CD4-positive, alpha-beta T cell (primary cell): ENCODE measurements at regions of chr5 and their contacts with region 1.

Region 1: DNA sequence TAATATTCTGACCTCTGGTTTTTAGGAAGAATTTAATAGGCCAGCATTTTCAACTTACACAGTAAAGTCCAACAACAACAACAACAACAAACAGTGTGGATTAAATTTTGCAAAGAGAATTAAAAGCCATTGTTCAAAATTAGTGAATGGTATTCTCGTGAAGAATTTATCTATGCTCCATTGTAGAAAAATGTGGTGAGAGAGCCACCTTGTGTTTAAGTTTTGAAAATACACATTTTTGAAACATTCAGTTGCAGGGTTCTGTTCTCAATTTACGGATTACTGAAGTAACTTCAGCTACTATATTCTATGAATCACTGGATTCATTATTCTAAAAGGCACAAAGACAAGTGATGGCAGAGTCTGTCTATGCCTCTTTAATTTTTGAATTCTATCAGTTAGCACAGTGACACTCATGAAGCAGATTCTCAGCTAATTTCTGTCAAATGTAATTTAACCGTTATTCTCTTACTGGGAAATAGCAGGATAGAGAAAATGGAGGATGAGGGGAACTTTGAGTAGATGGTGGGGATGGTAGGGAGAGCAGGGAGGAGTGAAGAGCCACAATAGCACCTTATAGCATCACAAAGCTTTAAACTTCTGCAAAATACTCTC is 11.0 kb downstream of the CCDC152 start:
- DNase-seq: peak in 3 of 14 experiments; percentile 38 to 49 (median 44)
- ATAC-seq: no peak
- H3K4me3 ChIP-seq: no peak overlapping the region
- H3K4me3 Mint-ChIP-seq: no peak overlapping the region
- H3K27ac ChIP-seq: no peak overlapping the region
- H3K27ac Mint-ChIP-seq: no peak overlapping the region
- H3K4me1 ChIP-seq: no peaks in the 10 kb centered on the region
- H3K4me1 Mint-ChIP-seq: no peaks in the 10 kb centered on the region
- H3K27me3 ChIP-seq: no peaks in the 10 kb centered on the region
- H3K27me3 Mint-ChIP-seq: peaks cover 5% of the 10 kb centered on the region
- CTCF ChIP-seq: peak; percentile 70

Region 2: DNA sequence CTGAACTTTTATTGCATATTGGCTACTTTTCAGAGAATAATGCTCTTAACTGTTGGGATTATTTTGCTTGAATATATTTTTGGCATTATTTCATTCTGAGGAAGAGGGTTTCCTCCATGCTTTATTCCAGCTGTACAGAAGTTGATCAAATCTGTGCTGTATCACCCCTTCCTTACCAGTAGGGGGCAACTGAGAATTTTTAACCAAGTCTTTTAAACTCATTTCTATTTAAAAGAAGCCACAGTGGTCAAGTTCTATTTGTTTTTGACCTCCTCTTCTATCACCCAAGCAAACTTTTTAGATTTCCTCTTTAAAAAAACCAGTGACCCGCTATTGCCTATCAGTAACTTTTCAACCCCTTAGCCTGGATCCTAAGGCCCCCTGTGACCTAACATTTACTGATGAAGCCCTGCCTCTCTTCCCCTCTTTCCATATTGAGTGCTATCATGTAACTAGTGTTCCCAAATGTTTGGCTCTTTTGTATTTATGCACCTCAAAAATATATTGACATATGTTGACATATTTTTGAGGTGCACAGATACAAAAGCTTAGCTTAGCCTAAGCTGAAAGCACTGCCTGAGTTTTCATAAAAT is 761.9 kb before region 1 on chr5:
- CTCF ChIA-PET with region 1: no interaction called
- POLR2A ChIA-PET with region 1: no interaction called
- intact Hi-C with region 1: loop called (anchors 10 kb)
- DNase-seq: peak in 3 of 14 experiments; percentile 5 to 19 (median 15)
- ATAC-seq: no peak
- H3K4me3 ChIP-seq: no peak overlapping the region
- H3K4me3 Mint-ChIP-seq: no peak overlapping the region
- H3K27ac ChIP-seq: no peak overlapping the region
- H3K27ac Mint-ChIP-seq: no peak overlapping the region
- H3K4me1 ChIP-seq: no peaks in the 10 kb centered on the region
- H3K4me1 Mint-ChIP-seq: no peaks in the 10 kb centered on the region
- H3K27me3 ChIP-seq: no peaks in the 10 kb centered on the region
- H3K27me3 Mint-ChIP-seq: peaks cover 12% of the 10 kb centered on the region
- CTCF ChIP-seq: peak; percentile 81

Region 3: GRCh38 chr5:42514754-42515153 is 252.8 kb before region 1 on chr5:
- CTCF ChIA-PET with region 1: no interaction called
- POLR2A ChIA-PET with region 1: no interaction called
- intact Hi-C with region 1: loop called (anchors 5 to 10 kb)
- DNase-seq: peak in 2 of 14 experiments; percentile 20 to 23
- ATAC-seq: no peak
- H3K4me3 ChIP-seq: no peak overlapping the region
- H3K4me3 Mint-ChIP-seq: no peak overlapping the region
- H3K27ac ChIP-seq: no peak overlapping the region
- H3K27ac Mint-ChIP-seq: no peak overlapping the region
- H3K4me1 ChIP-seq: no peaks in the 10 kb centered on the region
- H3K4me1 Mint-ChIP-seq: no peaks in the 10 kb centered on the region
- H3K27me3 ChIP-seq: no peaks in the 10 kb centered on the region
- H3K27me3 Mint-ChIP-seq: no peaks in the 10 kb centered on the region
- CTCF ChIP-seq: no peak

Region 4: DNA sequence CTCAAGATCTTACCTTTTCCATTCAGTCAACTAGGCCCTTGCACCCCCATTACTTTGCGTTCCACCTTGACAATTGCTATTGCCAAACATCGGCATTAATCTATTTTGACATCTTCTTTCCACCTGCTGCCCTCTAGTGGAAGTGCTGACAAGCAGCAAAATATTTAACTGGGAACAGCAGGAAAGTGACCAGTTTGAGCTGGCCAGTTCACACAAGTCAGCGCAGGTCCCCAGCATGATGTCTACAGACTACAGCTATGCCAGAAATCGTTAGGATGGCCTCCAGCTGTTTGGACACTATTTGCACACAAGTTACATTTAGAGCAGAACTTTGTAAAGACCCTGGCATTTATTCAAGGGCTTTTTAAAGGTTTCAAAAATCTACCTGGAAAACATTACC is 184.3 kb before region 1 on chr5:
- CTCF ChIA-PET with region 1: no interaction called
- POLR2A ChIA-PET with region 1: no interaction called
- intact Hi-C with region 1: loop called in 1 of 2 experiments (anchors 10 kb)
- DNase-seq: peak in 5 of 14 experiments; percentile 15 to 54 (median 43)
- ATAC-seq: no peak
- H3K4me3 ChIP-seq: no peak overlapping the region
- H3K4me3 Mint-ChIP-seq: no peak overlapping the region
- H3K27ac ChIP-seq: no peak overlapping the region
- H3K27ac Mint-ChIP-seq: no peak overlapping the region
- H3K4me1 ChIP-seq: no peaks in the 10 kb centered on the region
- H3K4me1 Mint-ChIP-seq: no peaks in the 10 kb centered on the region
- H3K27me3 ChIP-seq: peaks cover 0 to 8% of the 10 kb centered on the region in 2 experiments
- H3K27me3 Mint-ChIP-seq: peaks cover 40% of the 10 kb centered on the region
- CTCF ChIP-seq: peak; percentile 68

Region 5: DNA sequence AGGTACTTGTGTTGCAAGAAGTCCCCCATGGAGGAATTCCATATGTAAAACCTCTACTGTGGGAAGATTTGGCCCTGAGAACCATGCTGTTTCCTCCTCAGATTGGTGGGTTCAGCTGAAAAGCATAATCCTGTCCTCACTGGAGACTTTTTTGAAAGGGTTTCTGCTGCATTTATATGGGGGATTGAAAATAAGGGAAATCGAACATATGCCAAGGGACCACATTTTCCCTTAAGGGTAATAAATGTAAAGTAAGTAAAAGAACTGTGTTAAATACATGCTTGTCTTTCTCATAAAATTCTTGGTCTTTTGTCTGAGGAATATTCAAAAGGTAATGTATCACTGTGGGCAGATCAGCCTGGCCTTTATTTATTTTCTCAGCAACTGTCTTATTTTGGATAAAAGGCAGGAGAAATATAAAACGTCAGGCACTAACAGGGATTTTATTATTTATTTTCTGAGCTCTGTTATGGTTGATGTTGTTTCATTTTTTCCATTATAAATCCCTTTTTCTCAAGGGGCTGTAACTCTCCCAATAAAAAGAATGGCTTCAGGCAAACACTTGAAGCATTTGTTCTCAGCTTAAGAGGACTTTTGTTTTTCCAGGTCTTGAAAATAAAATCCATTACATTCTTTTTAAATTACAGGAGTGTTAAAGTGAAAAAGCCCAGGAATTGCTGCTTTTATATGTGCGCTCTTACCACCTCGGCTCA is 1490.2 kb after region 1 on chr5:
- CTCF ChIA-PET with region 1: no interaction called
- POLR2A ChIA-PET with region 1: no interaction called
- intact Hi-C with region 1: no loop called
- DNase-seq: no peak
- ATAC-seq: no peak
- H3K4me3 ChIP-seq: no peak overlapping the region
- H3K4me3 Mint-ChIP-seq: no peak overlapping the region
- H3K27ac ChIP-seq: no peak overlapping the region
- H3K27ac Mint-ChIP-seq: no peak overlapping the region
- H3K4me1 ChIP-seq: no peaks in the 10 kb centered on the region
- H3K4me1 Mint-ChIP-seq: no peaks in the 10 kb centered on the region
- H3K27me3 ChIP-seq: no peaks in the 10 kb centered on the region
- H3K27me3 Mint-ChIP-seq: no peaks in the 10 kb centered on the region
- CTCF ChIP-seq: no peak